PC-9 (cell line): ENCODE measurements at regions of chr1 and their contacts with region 1.

Region 1: GRCh38 chr1:175129997-175130648 is 62.5 kb downstream of the KIAA0040 start:
- DNase-seq: no peak
- H3K4me3 ChIP-seq: no peak overlapping the region
- H3K27ac ChIP-seq: no peak overlapping the region
- H3K4me1 ChIP-seq: no peaks in the 10 kb centered on the region
- H3K27me3 ChIP-seq: no peaks in the 10 kb centered on the region; the same call in 1 of the 2 replicates
- CTCF ChIP-seq: no peak

Region 2: DNA sequence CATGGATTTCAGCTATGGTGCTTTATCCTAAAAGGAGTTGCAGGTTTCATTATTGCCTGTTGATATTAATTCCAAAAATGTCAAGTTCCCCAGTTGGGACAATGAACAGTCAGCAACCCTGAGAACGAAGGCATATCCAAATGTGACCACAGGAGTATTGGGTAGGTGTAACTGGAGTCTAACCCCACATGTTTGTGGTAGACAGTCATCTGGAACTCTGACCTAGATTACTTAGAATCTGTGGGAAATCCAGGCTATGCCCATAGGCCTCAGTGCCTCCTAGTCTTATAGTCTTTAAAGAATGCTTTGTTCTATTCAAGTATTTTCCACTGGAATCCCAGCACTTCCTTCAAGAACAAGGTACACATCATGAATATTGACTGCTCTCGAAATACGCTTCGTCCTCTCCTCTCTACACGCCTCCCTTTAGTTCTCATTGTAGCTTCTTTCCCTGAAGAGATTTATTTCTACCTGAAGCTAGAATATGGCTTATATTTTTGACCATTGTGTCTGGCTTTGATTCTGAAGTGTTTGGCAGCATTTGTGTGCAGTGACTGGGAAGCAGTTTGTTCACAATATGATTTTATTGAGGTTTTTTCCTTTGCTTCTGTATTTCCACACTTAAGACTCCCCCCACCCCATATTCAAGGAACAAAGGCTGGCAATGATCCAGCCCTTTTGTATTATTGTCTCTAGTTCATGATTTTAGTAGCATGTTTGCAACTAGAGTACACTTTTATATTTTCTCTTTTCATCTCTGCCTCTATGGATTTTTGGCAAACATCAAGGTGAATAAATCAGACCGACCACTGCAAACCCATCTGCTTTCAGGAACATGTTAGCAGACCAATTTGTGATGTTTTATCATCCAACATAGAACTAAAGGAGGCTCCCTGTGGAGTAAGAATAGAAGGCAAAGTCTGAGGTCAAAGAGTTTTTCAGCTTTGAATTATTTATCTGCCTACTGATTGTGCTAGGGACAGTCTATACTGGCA is 503.8 kb before region 1 on chr1:
- CTCF ChIA-PET with region 1: no interaction called
- POLR2A ChIA-PET with region 1: no interaction called
- intact Hi-C with region 1: no loop called
- DNase-seq: peak in 1 of 2 experiments; percentile 37
- H3K4me3 ChIP-seq: no peak overlapping the region
- H3K27ac ChIP-seq: no peak overlapping the region
- H3K4me1 ChIP-seq: no peaks in the 10 kb centered on the region
- H3K27me3 ChIP-seq: no peaks in the 10 kb centered on the region
- CTCF ChIP-seq: no peak

Region 3: DNA sequence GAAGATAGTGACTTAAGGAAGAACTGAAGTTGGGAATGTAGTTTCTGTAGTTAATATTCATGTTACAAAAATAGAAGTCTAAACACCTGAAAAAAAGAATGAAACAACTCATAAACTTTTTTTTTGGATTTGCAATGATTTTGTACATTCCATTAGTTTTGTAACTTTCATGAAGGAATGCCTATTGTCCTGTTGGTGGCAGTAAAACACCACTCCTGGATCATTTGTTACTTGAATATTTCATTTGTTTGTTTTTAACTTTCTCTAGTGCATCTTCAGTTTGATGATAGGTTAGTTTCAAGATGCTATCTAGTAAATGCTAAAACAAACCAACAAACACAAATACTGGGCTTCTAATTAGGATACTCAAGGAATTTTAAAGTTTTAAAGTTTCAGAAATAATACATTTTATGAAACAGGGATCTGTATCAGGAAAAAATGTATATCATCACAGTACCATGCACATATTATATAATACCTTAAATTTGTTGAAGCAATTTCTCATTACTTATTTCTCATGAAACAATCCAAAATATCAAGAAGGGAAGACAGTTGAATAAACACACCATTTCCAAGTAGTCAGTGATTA is 360.1 kb before region 1 on chr1:
- CTCF ChIA-PET with region 1: no interaction called
- POLR2A ChIA-PET with region 1: no interaction called
- intact Hi-C with region 1: loop called (anchors 5 kb)
- DNase-seq: peak in 1 of 2 experiments; percentile 66
- H3K4me3 ChIP-seq: no peak overlapping the region
- H3K27ac ChIP-seq: no peak overlapping the region
- H3K4me1 ChIP-seq: no peaks in the 10 kb centered on the region
- H3K27me3 ChIP-seq: no peaks in the 10 kb centered on the region
- CTCF ChIP-seq: peak; percentile 90

Region 4: DNA sequence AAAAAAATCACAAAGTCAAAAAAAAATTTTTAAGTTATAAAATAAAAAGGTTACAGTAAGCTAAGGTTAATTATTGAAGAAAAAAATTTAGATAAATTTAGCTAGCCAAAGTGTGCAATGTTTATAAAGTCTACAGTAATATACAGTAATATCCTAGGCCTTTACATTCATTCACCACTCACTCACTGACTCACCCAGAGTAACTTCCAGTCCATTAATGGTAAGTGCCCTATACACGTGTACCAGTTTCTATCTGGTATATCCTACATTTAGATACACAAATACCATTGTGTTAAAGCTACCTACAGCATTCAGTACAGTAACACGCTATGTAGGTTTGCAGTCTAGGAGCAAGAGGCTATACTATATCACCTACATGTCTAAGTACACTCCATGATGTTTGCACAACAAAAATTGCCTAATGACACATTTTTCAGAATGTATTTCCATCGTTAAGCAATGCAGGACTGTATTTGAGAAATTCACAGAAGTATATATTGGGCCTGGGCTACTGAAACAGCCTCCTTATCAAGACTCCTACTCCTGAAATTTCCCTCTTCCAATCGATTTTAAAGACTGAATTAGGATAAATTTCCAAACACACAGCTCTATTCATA is 921.9 kb after region 1 on chr1:
- CTCF ChIA-PET with region 1: interaction called, 10 read pairs
- POLR2A ChIA-PET with region 1: no interaction called
- intact Hi-C with region 1: no loop called
- DNase-seq: no peak
- H3K4me3 ChIP-seq: no peak overlapping the region
- H3K27ac ChIP-seq: no peak overlapping the region
- H3K4me1 ChIP-seq: no peaks in the 10 kb centered on the region
- H3K27me3 ChIP-seq: no peaks in the 10 kb centered on the region
- CTCF ChIP-seq: no peak